ENCODE measurements at regions of chr5 and their contacts with region 1.

Region 1: DNA sequence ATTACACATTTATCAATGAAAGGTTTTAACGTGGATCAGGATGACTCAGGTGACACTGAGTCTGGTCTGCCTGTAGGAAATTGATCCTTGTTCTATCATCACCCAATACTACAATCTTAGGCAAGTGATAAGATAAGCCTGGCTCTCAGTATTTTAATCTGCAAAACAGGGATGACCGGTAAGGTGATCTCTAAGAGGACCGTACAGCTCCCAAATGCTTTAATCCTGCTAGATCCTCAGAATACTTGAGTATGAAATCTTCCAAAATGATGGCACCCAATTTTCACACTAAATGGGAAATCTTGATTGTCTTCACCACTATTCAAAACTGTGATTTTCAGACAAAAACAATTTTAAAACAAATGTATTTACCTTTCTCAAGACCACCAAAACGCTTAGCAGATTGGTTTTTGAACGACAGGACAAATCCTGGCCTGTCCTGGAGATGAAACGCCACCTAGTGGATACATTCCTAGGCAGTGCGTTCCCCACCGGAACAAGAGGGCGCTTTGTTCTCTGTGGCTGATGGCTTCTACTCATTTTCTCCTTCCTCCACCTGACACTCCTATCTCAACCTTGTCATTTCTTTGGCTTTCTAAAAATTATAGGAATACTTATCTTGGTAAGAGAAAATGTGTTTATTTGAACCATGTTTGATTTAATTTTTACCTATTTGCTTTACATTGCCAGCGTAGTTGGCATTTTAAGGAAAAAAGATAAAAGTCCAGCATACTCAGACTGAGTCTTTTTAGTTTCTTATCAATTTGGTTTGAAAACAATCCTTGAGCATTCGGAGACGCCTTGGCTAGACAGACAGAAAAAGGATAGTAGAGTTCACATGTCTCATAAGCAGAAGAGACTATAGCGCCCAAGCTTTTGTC is 41.2 kb upstream of the VCAN start:
- DNase-seq: peak; percentile 56 to 68
- H3K4me3 ChIP-seq: no peak overlapping the region
- H3K27ac ChIP-seq: no peak overlapping the region
- H3K4me1 ChIP-seq: peaks cover 0 to 3% (median 0%) of the 10 kb centered on the region in 4 experiments; a peak in 1 of 7 replicates
- H3K27me3 ChIP-seq: no peaks in the 10 kb centered on the region
- CTCF ChIP-seq: peak; percentile 88 to 98 (median 91)
- EP300 ChIP-seq: no peak
- POLR2A ChIP-seq: no peak
- RAD21 ChIP-seq: peak; percentile 91 to 94

Region 2: DNA sequence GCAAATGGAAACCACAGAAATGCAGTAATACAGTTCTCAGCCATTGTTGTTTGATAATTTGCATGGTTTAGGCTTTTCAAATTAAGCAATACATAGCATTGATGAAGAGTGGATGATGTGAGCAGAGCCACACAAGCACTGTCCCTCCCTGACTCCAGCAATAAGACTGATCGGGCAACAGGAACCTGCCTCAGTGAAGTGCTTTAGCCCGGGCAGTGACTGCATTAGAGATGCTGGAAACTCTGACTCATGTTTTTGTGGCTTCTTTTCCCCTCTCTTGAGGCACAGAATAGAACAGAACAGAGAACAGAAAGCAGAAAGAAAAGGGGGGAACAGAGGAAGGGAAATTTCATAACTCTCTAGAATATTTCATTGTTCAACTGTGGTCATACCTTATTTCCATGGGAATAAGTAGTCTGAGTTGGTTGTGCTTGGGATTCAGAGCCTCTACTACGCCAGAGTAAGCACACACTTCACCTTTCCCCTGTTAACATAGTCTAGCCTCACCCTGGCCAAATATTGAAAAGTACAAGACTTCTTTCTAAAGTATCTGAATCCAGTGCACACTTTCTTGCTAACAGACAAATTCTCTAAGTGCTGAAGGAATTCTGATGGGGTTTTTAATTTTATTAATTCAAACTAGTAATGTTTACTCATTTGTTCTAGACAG is 123.7 kb before region 1 on chr5:
- CTCF ChIA-PET with region 1: no interaction called
- POLR2A ChIA-PET with region 1: no interaction called
- DNase-seq: no peak
- H3K4me3 ChIP-seq: no peak overlapping the region
- H3K27ac ChIP-seq: no peak overlapping the region
- H3K4me1 ChIP-seq: no peaks in the 10 kb centered on the region; a peak in 1 of 7 replicates
- H3K27me3 ChIP-seq: no peaks in the 10 kb centered on the region
- CTCF ChIP-seq: no peak
- EP300 ChIP-seq: no peak
- POLR2A ChIP-seq: no peak
- RAD21 ChIP-seq: no peak

Region 3: DNA sequence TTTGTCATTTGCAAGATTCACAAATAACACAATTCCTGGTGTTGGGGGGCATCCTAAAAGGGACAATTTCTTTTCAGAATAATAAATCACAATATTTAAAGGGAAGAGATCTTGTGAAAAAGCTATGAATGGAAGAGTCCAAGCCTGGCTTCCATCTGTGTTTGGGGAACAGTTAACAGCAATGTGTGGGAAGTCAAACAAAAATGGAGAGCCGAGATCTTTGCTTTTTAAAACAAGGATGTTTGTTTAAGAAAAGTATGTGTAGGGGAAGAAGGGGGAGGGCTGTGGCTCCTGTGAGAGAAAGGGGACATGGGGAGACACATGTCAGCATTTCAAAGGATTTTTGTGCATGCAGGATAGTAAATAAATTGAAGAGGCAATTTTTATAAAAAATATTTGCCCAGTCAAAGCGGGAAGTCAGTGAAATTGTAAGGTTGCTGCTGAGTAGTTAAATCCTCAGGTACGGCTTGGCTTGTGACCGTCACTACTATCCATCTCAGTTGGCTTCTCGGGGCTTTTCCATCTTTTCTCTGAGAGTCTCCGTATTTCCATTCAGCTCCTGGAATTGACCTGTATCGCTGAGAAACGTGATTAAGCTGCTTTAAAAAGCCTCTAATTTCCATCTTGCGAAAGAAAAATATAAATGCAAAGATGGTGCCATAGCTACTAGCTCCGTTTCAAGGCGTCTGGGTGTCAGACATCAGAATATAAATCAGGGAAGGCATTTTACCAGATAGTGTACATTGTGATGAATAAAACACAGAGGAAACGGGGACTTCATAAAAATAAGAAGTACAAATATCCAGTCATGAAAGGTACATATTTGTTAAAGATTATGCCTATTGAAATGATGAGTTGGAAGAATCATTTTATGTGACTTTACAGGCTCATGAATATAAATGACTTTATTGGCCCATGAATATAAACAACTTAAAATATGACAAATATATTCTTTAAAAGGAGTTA is 11.7 kb before region 1 on chr5:
- CTCF ChIA-PET with region 1: interaction called, 16 read pairs
- POLR2A ChIA-PET with region 1: no interaction called
- DNase-seq: no peak
- H3K4me3 ChIP-seq: no peak overlapping the region
- H3K27ac ChIP-seq: no peak overlapping the region
- H3K4me1 ChIP-seq: peaks cover 0 to 6% (median 0%) of the 10 kb centered on the region in 4 experiments; a peak in 2 of 7 replicates
- H3K27me3 ChIP-seq: peaks cover 0 to 1% (median 0%) of the 10 kb centered on the region in 4 experiments; a peak in 1 of 7 replicates
- CTCF ChIP-seq: no peak
- EP300 ChIP-seq: no peak
- POLR2A ChIP-seq: no peak
- RAD21 ChIP-seq: no peak

Region 4: GRCh38 chr5:83464261-83464660 is 33.9 kb after region 1 on chr5:
- CTCF ChIA-PET with region 1: interaction called, 12 read pairs
- POLR2A ChIA-PET with region 1: no interaction called
- DNase-seq: no peak
- H3K4me3 ChIP-seq: peak overlapping the region in 1 of 4 experiments; percentile 38; a peak in 1 of 8 replicates
- H3K27ac ChIP-seq: no peak overlapping the region
- H3K4me1 ChIP-seq: peaks cover 2 to 27% (median 11%) of the 10 kb centered on the region in 4 experiments; a peak in 5 of 7 replicates
- H3K27me3 ChIP-seq: no peaks in the 10 kb centered on the region
- CTCF ChIP-seq: no peak
- EP300 ChIP-seq: no peak
- POLR2A ChIP-seq: no peak
- RAD21 ChIP-seq: no peak

Measured in H1 (cell line).